AG04450 (cell line): ENCODE measurements at regions of chr9 and their contacts with region 1.

Region 1: GRCh38 chr9:126033318-126033717 is 286.1 kb downstream of the PBX3 start:
- DNase-seq: no peak
- H3K4me3 ChIP-seq: no peak overlapping the region
- H3K27ac ChIP-seq: no peak overlapping the region
- H3K27me3 ChIP-seq: peaks cover 8% of the 10 kb centered on the region
- CTCF ChIP-seq: no peak

Region 2: DNA sequence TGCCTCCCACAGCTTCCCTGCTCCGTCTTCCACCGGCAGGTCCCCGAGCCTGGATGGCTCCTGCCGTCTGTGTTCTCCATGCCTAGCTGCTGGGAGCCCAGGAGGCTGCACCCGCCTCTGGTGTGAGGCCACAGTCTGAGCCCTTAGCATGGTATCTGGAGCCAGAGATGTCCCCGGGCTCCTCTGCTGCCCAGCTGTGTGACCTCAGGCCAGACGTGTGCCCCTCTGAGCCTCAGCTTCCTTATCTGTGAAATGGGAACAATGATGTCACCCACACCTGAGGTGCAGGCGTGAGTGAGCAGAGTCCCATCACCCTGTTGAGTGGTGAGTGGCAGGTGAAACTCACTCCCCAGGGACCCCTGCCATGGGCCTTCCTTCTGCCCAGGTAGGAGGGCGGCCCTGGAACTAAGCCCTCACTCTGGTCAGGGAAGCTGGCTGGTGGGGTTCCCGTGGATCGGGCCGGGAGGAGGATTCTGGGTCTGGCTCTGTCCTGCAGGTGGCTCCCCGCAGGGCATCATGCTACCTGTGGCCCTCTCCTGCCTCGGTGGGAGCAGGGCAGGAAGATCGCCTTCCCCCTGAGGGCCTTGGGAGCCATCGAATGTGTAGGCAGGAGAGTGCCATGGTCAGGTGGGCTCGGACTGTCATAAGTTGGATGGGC is 47.2 kb before region 1 on chr9:
- CTCF ChIA-PET with region 1: interaction called, 10 read pairs
- POLR2A ChIA-PET with region 1: no interaction called
- DNase-seq: no peak
- H3K4me3 ChIP-seq: no peak overlapping the region
- H3K27ac ChIP-seq: no peak overlapping the region
- H3K27me3 ChIP-seq: peaks cover 9% of the 10 kb centered on the region
- CTCF ChIP-seq: no peak